Right ventricle myocardium inferior (tissue), 1 donor: ENCODE measurements at regions of chr1 and their contacts with region 1.

Region 1: GRCh38 chr1:154878371-154879022 is 8.4 kb upstream of the KCNN3 start:
- DNase-seq: peak; percentile 89
- ATAC-seq: peak; percentile 92

Region 2: DNA sequence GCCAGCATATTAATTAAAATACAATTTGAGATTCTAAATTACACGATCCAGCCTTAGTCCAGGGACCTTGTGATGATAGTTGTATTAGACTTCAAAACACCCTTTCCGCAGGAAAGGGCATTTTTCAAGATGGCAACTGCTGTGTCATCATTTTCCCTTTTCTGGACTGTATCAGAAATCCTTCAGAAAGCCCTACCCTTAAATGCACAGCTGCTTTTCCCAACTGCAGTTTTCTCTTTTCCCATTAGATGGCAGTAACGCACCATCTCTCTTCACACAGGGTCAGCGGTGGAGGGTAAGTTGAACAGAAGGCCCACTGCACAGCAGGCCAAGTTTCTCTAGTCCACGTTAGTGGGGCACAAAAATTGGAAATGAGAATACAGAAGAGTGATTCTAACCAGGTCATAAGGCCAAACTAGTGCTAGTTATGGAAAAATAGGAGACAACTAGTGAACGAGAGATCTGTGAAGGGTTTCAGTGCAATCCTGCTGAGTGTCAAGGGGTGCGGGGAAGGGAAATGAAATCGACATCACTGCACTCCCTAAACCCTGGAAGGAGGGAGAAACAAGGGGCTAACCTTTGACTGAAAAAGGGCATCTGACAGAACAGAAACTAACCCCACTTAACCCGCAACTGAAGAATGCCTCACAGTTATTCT is 398.6 kb before region 1 on chr1:
- intact Hi-C with region 1: loop called (anchors 5 kb)
- DNase-seq: no peak
- ATAC-seq: peak; percentile 95

Region 3: DNA sequence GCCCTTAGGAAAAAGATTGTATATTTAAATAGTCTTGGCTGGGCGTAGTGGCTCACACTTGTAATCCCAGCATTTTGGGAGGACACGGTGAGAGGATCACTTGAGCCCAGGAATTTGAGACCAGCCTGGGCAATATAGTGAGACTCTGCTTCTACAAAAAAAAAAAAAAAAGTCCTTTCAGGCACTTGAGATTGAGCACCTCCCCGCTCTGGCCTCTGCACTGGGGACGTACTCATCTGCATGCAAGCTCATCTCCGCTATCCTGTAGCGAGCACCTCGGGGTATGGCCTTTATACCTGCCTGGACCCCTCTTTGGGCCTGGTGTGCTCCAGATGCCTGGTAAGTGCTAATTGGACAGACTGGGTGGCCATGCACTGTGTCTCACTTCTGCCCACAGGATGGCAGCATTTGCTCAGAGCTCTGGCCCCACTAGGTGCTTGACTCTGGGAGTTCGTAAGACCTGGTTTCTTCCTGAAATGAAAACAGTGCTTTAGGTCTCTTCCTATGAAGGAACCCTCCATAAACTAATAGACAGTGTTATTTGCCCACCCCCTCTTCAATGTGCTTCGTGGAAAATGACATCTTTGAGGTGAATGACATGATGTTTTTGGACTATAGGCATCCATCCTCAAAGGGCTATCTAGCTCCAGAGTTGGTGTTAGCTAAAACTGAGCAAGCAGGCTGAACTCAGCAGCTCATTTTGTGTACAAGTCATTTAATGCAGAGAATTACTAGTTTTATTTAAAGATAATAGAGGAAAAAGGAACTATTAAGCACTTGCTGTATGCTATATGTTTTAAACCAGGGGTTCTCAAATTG is 208.8 kb before region 1 on chr1:
- intact Hi-C with region 1: loop called (anchors 1 kb)
- DNase-seq: peak; percentile 81
- ATAC-seq: peak; percentile 96

Region 4: DNA sequence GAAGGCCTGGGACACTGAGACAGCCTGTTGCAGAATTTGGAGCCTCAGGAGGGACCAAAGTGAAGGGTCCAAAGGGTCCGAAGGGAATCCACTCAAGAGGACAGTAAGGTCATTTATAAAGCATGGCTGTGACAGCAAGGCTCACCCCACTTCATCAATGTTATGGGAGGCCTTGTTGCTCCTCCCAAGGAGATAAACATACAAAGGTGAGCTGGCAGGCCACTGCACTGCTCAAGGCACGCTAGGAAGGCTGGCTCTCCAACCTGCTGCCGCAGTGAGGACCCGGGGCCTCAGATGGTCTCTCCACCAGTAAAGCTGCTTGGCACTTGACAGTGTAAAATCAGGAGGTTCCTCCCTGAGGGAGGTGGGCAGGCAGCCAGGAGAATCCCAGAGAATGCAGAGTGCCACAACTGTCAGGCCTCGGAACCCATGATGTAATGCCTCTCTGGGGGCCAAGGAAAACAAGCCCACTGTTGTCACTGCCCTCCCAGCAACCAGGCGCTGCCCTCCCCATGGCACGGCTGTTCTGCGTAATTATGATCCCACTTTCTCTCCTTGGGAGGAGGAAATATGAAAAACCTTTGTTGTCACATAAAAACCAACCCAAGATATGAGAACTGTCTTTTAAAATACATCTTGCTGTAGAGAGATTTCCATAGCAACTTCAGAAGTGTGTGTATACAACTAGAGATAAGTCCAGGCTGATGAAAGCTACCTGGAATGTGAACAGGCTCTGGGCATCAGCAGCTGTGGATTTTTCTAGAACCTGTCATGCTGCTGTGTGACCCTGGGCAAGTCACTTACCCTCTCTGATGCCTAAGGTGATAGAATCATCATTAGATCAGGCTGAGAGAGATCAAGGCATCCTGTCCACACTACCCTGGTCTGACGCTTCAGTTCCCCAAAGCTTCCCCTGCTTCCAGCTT is 110.9 kb before region 1 on chr1:
- intact Hi-C with region 1: loop called (anchors 2 kb)
- DNase-seq: no peak
- ATAC-seq: peak; percentile 69

Region 5: DNA sequence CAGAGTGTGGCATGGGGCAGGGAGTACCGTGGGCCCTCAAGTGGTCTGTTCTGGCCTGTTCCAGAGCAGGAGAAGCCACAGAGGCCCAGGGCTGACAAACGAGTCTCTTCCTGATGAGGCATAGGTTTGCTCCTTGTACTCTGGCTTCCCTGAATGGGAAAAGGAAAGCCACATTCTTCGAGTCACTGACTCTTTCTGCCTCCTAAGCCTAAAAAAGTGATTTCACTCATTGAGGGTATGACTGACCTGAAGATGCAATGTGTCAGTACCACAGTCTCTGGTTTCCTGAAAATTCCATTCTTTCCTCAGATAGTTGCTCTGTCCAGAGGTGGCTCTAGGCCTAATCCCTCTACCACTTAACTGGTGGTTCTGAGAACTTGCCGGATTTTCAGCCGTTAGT is 100.7 kb before region 1 on chr1:
- intact Hi-C with region 1: no loop called
- DNase-seq: no peak
- ATAC-seq: no peak